Dorsolateral prefrontal cortex (tissue), 120 donors: ENCODE measurements at regions of chr16 and their contacts with region 1.

Region 1: DNA sequence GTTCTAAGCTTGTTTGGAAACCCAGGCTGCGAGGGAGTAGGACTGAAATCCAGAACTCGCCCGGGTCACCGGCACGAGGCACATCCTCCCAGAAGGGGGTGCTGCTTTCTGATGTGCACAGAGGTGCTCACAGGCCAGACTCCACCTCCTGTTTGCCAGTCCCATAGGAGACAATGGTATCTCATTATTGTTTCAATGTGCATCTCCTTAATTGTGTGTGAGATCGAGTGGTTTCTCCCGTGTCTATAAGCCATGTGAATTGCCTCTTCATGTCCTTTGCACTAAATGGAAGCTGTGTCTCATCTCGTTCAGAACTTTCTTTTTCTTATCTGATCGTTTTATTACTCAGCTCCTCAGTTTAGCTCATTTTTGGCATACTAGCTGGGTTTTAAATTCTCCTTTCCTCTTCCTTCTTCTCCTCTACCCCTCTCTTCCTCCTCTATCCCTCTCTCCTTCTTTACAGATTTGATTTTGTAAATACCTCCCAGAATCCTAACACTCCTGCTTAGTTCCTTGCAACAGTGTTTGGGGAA is 32.1 kb upstream of the PRKCB start:
- DNase-seq: peak; percentile 30 to 77 (median 60)
- H3K4me3 ChIP-seq: peak overlapping the region in 43 of 59 donors; percentile 0 to 50 (median 32)
- H3K27ac ChIP-seq: no peak overlapping the region
- H3K27me3 ChIP-seq: no peaks in the 10 kb centered on the region
- CTCF ChIP-seq: peak; percentile 25 to 83 (median 64)

Region 2: DNA sequence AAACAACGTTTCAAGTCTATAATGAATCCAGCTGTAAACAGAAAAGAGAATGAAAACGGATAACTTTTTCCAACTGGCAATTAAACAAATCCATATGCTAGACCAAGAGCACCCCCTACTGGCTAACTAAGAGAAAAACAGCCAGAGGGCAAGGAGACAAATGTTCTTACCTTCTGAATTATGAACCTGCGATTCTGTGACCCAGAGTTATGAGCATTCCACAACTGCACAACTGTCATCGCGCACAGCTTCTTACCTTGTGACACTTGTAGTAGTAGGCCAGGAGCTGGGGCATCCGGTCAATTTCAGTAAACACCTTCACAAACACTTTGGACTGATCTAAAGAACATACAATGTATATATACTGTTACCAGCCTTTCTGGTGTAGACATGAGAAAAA is 369.3 kb before region 1 on chr16:
- intact Hi-C with region 1: no loop called
- DNase-seq: peak in 1 of 10 donors; percentile 42
- H3K4me3 ChIP-seq: no peak overlapping the region
- H3K27ac ChIP-seq: peak overlapping the region in 1 of 59 donors; percentile 27
- H3K27me3 ChIP-seq: no peaks in the 10 kb centered on the region
- CTCF ChIP-seq: peak; percentile 80 to 98 (median 92)

Region 3: GRCh38 chr16:23744561-23744960 is 59.1 kb before region 1 on chr16:
- intact Hi-C with region 1: no loop called
- DNase-seq: no peak
- H3K4me3 ChIP-seq: no peak overlapping the region
- H3K27ac ChIP-seq: no peak overlapping the region
- H3K27me3 ChIP-seq: peaks cover 0 to 4% (median 0%) of the 10 kb centered on the region in 45 donors
- CTCF ChIP-seq: no peak

Region 4: DNA sequence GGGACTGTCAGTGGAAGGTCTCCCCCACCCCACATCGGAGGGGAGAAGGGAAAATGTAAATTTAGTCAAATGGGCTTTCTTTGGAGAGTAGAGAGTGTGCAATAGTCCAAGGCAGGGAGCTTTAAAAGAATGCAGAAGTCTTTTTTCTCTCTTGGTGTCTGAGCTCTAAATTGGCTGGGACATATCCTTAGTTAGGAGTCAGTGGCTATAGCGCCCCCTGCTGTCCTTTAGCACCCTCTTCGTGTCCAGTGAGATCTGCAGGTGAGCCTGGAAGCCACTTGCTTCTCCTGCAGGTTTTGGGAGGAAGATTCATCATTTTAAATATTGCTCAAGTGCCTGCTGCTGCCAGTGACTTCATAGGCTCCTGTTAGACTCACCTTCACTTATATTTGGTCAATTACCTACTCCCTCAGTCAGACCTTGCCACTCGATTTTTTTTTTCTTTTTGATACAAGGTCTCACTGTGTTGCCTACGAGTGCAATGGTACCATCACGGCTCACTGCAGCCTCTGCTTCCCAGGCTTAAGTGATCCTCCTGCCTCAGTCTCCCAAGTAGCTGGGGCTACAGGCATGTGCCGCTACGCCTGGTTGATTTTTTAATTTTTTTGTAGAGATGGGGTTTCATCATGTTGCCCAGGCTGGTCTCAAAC is 206.9 kb after region 1 on chr16:
- intact Hi-C with region 1: loop called (anchors 1 to 2 kb)
- DNase-seq: peak; percentile 75 to 95 (median 82)
- H3K4me3 ChIP-seq: no peak overlapping the region
- H3K27ac ChIP-seq: peak overlapping the region in 9 of 59 donors; percentile 5 to 69 (median 26)
- H3K27me3 ChIP-seq: no peaks in the 10 kb centered on the region
- CTCF ChIP-seq: peak; percentile 62 to 96 (median 89)

Region 5: GRCh38 chr16:24036614-24037013 is 233.0 kb after region 1 on chr16:
- intact Hi-C with region 1: loop called (anchors 5 kb)
- DNase-seq: peak in 5 of 10 donors; percentile 19 to 53 (median 41)
- H3K4me3 ChIP-seq: no peak overlapping the region
- H3K27ac ChIP-seq: peak overlapping the region in 1 of 59 donors; percentile 18
- H3K27me3 ChIP-seq: no peaks in the 10 kb centered on the region
- CTCF ChIP-seq: peak; percentile 43 to 90 (median 80)